Activated naive CD4-positive, alpha-beta T cell treated with anti-CD3 and anti-CD28 coated beads, Interleukin-2, amount 10 ng/mL, durations not matched to agents 7 days and 5 days (primary cell): ENCODE measurements at regions of chr11 and their contacts with region 1.

Region 1: DNA sequence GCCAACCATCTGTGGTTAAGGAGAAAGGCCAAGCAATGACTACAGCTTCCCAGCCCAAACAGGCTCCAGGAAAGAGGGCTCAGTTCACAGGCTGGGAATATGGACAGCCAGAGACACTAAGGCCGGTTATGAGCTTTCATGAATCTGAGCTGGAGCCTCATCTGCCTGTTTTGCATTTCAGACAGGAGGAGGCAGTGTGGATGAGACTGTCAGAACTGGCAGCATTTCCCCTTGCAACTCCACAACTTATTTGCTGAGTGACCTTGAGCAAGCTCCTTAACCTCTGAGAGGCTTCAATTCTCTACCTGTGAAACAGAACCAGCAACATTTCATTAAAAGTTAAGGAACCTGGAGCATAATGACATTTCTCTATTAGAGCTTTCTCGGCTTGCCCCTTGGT is 264.0 kb downstream of the ETS1 start:
- DNase-seq: peak; percentile 69
- H3K4me3 Mint-ChIP-seq: no peak overlapping the region
- H3K27ac Mint-ChIP-seq: peak overlapping the region; percentile 96
- H3K4me1 Mint-ChIP-seq: peaks cover 91% of the 10 kb centered on the region
- H3K27me3 Mint-ChIP-seq: no peaks in the 10 kb centered on the region

Region 2: DNA sequence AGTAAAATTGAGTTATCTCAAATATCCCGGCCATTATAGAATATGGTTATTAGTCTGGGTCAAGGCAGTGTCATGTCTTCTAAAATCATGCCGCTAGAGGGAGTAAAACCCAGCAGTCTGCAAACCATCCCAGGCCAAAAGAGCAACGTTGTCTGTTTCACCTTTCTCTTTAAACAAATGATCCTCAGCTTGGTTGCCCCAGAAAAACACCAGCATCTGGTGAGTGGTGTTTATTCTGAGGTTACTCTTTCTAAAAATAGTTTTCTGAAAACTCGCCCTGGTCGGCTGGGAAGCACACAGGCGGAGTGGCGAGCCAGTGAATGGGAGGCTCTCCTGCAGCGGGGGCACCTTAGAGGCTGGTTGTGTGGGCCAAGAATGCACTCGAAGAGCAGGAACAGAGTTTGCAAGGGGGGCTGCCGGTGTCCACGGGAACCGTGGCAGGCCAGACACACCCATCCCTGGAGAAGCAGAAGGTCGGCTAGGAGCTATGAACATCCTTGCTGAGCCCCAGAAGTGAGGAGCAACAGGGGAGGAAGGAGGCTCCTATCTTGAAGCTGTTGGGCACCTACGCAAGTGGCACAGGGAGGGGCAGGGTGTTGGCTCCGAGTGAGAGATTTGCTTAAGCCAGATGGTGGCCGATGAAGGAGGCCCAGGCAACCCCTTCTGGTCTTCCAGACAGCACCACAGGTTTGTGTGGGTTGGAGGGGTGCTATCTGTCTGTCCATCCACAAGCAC is 33.1 kb before region 1 on chr11:
- CTCF ChIA-PET with region 1: interaction called, 66 read pairs
- DNase-seq: peak; percentile 82
- H3K4me3 Mint-ChIP-seq: peak overlapping the region; percentile 85
- H3K27ac Mint-ChIP-seq: peak overlapping the region; percentile 96
- H3K4me1 Mint-ChIP-seq: peaks cover 92% of the 10 kb centered on the region
- H3K27me3 Mint-ChIP-seq: no peaks in the 10 kb centered on the region

Region 3: DNA sequence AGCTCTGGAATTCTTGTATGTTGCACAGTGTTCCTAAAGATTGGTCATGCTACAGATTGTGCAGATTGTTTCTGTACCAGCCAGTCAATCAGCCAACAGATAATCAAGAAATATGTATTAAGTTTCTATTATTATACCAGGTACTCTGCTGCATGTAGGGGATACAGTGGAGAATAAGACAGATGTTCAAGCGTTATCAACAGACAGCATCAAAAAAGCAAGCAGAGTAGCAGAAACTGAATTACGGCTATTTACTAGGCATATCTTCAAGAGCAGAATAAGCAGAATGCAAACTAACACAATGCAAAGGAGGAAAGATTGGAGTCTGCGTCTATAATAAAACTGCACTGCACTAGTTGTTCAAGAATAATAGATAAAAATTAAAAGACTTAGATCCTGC is 14.6 kb before region 1 on chr11:
- CTCF ChIA-PET with region 1: interaction called, 13 read pairs
- DNase-seq: no peak
- H3K4me3 Mint-ChIP-seq: no peak overlapping the region
- H3K27ac Mint-ChIP-seq: no peak overlapping the region
- H3K4me1 Mint-ChIP-seq: peaks cover 84% of the 10 kb centered on the region
- H3K27me3 Mint-ChIP-seq: no peaks in the 10 kb centered on the region

Region 4: DNA sequence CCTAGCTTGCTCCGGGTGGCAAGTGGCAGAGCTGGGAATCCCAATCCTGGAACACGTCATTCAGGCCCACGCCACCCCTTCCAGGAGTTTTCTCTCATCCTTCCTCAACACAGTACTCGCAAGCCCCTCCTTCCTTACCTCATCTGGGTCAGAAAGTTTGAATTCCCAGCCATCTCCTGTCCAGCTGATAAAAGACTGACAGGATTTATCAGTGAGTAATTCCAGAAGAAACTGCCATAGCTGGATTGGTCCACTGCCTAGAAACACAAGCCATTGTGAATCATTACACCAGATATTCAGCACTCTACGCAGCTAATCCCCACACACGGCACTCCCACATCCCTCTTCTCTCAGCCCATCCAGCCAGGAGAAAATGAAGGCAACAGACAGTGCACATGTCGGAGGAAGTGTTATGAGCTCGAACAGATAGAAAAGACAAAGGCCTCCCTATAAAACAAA is 140.0 kb after region 1 on chr11:
- CTCF ChIA-PET with region 1: interaction called, 12 read pairs
- DNase-seq: no peak
- H3K4me3 Mint-ChIP-seq: peak overlapping the region; percentile 36
- H3K27ac Mint-ChIP-seq: peak overlapping the region; percentile 92
- H3K4me1 Mint-ChIP-seq: peaks cover 93% of the 10 kb centered on the region
- H3K27me3 Mint-ChIP-seq: no peaks in the 10 kb centered on the region

Region 5: DNA sequence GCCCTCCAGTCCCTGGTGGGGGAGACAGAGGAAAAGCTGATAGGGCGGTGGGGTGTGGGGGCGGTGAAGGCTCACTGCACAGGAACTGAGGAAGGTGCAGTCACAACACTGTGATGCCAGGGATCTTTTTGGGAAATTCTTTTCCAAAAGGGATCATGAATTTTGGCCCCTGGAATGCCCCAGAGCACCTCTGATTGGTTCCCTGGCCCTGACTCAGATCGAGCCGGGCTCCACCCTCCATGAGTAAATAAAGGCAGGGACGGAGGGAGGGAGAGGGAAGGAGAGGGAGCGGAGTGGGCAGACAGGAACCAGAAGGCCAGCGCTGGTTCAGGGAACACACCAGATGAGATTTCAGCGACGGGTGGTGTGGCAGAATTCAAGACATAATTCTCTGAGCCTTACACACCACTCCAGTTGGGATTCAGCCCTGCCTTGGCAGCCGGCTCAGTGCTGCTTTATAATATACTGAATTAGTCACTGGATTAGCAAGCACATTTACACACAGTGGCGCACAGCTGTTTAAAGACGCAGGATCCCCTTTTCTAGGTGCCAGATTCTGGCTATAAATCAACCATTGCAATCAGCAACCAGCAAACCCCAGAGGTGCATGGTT is 183.7 kb after region 1 on chr11:
- CTCF ChIA-PET with region 1: interaction called, 13 read pairs
- DNase-seq: peak; percentile 51
- H3K4me3 Mint-ChIP-seq: peak overlapping the region; percentile 96
- H3K27ac Mint-ChIP-seq: peak overlapping the region; percentile 95
- H3K4me1 Mint-ChIP-seq: peaks cover 99% of the 10 kb centered on the region
- H3K27me3 Mint-ChIP-seq: no peaks in the 10 kb centered on the region